GM23248 (cell line): ENCODE measurements at regions of chrX and their contacts with region 1.

Region 1: GRCh38 chrX:140057001-140057411 is 91.7 kb upstream of the CXorf66 start:
- DNase-seq: peak; percentile 66
- H3K4me3 ChIP-seq: no peak overlapping the region
- H3K27ac ChIP-seq: no peak overlapping the region
- H3K4me1 ChIP-seq: no peaks in the 10 kb centered on the region
- H3K27me3 ChIP-seq: no peaks in the 10 kb centered on the region

Region 2: DNA sequence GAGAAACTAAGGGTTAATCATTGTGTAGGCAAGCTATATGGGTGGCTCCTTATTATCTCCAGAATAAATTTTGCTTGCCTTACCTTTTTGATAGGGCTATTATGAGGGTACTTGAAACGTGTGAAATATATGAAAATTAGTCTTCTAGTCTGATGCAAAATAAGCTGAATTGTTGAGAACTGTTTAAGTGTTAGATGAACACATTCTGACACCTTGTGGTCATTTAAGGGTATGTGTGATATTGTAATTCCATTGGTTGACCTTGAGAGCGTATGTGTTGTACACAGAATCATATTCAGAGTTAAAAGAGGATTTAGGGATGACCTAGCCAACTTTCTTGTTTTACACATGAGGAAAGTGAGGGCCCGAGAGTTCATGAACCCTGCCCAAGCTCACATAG is 607.9 kb after region 1 on chrX:
- in situ Hi-C with region 1: loop called (anchors 25 kb)
- DNase-seq: peak; percentile 48
- H3K4me3 ChIP-seq: no peak overlapping the region
- H3K27ac ChIP-seq: no peak overlapping the region
- H3K4me1 ChIP-seq: no peaks in the 10 kb centered on the region
- H3K27me3 ChIP-seq: no peaks in the 10 kb centered on the region